Activated CD4-positive, alpha-beta T cell treated with anti-CD3 and anti-CD28 coated beads, Interleukin-2, amount 10 ng/mL, durations not matched to agents 7 days and 5 days (primary cell): ENCODE measurements at regions of chr2 and their contacts with region 1.

Region 1: DNA sequence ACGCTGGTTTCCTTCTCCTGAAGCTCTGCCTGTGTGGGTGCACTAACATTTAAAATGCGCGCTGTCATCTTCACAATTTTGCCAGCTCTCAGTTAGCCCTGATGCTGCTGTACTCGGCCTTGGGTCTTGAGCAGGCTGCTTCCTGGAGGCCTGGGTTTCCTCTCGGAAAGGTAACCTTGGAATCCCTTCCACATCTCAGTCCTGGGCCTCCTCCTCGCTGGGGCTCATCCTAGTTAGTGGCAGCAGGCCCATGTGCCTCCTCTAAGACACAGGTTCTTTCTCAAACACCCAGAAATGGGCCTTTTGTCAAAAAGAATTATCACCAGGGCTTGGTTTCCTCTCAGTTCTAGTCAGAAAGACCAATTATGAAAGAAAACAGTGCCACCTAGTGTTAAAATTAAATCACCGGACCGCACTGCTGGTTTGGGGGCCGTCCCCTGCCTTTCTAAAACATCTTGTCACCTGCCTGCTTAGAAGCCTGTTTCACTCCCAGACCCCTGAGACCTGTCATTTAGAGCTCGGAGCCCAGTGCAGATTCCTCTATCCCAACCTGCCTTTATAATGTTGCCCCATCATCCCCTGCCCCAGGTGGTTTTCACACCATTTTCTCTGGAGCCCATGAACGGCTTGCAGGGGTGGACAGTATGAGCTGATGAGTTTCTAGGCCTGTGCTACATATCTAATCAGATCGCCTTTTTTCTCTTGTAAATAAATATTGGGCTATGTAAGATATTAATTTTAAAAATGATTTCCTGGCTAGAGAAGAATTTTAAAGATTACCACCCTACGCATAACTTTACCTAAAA is 42.4 kb downstream of the HK2 start:
- DNase-seq: peak; percentile 66
- H3K4me3 Mint-ChIP-seq: no peak overlapping the region
- H3K27ac Mint-ChIP-seq: peak overlapping the region; percentile 65
- H3K4me1 Mint-ChIP-seq: peaks cover 6% of the 10 kb centered on the region
- H3K27me3 Mint-ChIP-seq: no peaks in the 10 kb centered on the region

Region 2: GRCh38 chr2:74653985-74654882 is 222.1 kb before region 1 on chr2 and contains the start of gene SEMA4F:
- CTCF ChIA-PET with region 1: no interaction called
- POLR2A ChIA-PET with region 1: no interaction called
- DNase-seq: peak; percentile 97
- H3K4me3 Mint-ChIP-seq: peak within 1 kb of the TSS; percentile 72
- H3K27ac Mint-ChIP-seq: peak within 1 kb of the TSS; percentile 42
- H3K4me1 Mint-ChIP-seq: peaks cover 20% of the 10 kb centered on the region
- H3K27me3 Mint-ChIP-seq: peaks cover 7% of the 10 kb centered on the region
- total RNA-seq, gene SEMA4F: 6.5 to 8.3 TPM

Region 3: DNA sequence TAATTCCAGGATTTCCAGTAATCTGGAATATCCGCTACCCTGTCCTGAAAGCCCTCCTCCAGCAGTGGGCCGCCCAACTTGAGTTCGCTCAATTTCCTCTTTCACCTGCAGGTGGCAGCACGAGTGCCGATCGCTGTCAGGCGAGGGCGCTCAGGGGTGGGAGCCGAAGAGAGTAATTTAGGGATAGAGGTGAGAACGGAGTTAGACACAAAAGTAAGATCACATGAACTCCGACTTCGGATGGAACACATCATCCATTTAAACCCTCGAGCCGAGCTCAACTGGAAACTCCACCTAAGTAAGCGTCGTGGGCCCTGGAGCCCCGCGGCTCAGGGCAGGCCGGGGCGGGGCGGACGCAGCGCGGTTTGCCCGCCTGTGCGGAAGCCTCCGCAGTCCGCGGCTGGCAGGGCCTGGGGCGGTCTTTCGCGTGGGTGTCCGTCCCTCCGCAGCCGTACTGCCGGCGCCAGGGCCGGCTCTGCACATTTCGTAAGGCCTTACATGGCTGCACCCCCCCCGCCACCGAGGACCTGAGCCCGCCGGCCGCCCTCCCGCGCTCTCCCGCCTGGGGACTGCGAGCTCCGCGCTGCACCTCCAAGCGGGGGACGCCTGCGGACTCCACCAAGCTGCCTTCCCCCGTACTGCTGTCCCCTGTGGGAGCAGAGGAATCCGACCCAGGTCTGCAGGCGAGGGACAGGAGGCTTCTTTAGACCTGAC is 161.0 kb before region 1 on chr2:
- CTCF ChIA-PET with region 1: interaction called, 19 read pairs
- POLR2A ChIA-PET with region 1: no interaction called
- DNase-seq: peak; percentile 81
- H3K4me3 Mint-ChIP-seq: peak overlapping the region; percentile 72
- H3K27ac Mint-ChIP-seq: no peak overlapping the region
- H3K4me1 Mint-ChIP-seq: peaks cover 8% of the 10 kb centered on the region
- H3K27me3 Mint-ChIP-seq: peaks cover 14% of the 10 kb centered on the region

Region 4: DNA sequence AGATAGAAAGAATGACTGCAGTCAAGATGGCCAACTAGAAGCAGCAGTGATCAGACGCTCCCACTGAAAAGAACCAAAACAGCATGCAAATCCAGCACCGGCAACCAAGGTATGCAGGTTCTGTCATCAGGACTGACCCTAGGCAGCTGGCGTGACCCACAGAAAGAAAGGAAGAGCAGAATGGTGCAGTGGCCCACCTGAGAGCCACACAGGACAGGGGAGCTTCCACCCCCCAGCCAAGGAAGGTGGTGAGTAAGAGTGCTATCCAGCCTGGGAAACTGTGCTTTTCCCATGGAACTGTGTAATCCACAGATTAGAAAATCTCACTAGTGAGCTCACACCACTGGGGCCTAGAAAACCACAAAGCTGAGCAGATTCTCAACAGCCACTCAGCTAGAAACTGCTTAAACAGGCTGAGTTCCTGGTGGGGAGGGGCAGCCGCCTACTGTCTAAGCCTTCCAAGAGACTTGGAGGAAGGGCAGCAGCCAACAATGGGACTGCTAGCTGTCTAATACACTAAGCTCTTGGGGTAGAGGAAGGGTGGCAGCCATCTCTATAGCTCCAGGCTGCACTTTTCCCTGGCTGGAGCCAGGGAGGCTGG is 556.6 kb after region 1 on chr2:
- CTCF ChIA-PET with region 1: no interaction called
- POLR2A ChIA-PET with region 1: no interaction called
- DNase-seq: no peak
- H3K4me3 Mint-ChIP-seq: no peak overlapping the region
- H3K27ac Mint-ChIP-seq: no peak overlapping the region
- H3K4me1 Mint-ChIP-seq: no peaks in the 10 kb centered on the region
- H3K27me3 Mint-ChIP-seq: peaks cover 5% of the 10 kb centered on the region